SK-N-SH (cell line): ENCODE measurements at regions of chr16 and their contacts with region 1.

Region 1: GRCh38 chr16:58119509-58119845 is 9.7 kb downstream of the CFAP20 start:
- DNase-seq: no peak
- H3K4me3 ChIP-seq: no peak overlapping the region
- H3K27ac ChIP-seq: peak overlapping the region in 1 of 2 experiments; percentile 60; a peak in 2 of 4 replicates
- H3K4me1 ChIP-seq: peaks cover 30 to 71% of the 10 kb centered on the region in 2 experiments
- H3K27me3 ChIP-seq: no peaks in the 10 kb centered on the region
- CTCF ChIP-seq: no peak
- EP300 ChIP-seq: no peak
- RAD21 ChIP-seq: no peak

Region 2: DNA sequence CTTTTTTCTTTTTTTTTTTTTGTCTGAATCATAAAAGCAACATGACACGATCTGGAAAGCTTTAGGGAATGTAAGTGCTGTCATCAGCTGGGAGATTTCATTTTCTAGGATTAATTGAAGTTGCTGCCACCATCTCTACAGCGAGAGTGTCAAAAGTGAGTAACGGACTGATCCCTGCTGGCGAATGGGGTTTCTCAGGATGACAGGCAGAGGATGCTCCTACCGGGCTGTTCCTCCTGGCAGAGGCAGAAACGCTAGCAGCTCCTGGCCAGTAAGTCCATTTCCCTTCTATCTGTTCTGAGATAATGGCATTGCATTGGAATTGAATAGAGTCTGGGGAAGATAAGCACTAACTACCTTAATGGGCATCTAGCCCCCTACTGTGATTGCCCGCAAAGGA is 236.7 kb before region 1 on chr16:
- CTCF ChIA-PET with region 1: interaction called, 10 read pairs
- POLR2A ChIA-PET with region 1: no interaction called
- DNase-seq: peak; percentile 90
- H3K4me3 ChIP-seq: no peak overlapping the region
- H3K27ac ChIP-seq: no peak overlapping the region
- H3K4me1 ChIP-seq: peaks cover 0 to 12% of the 10 kb centered on the region in 2 experiments; a peak in 2 of 4 replicates
- H3K27me3 ChIP-seq: peaks cover 5% of the 10 kb centered on the region; the same call in 1 of the 2 replicates
- CTCF ChIP-seq: no peak
- EP300 ChIP-seq: peak in 1 of 2 experiments; percentile 64; a peak in 2 of 4 replicates
- RAD21 ChIP-seq: peak; percentile 23; the same call in 1 of the 2 replicates

Region 3: DNA sequence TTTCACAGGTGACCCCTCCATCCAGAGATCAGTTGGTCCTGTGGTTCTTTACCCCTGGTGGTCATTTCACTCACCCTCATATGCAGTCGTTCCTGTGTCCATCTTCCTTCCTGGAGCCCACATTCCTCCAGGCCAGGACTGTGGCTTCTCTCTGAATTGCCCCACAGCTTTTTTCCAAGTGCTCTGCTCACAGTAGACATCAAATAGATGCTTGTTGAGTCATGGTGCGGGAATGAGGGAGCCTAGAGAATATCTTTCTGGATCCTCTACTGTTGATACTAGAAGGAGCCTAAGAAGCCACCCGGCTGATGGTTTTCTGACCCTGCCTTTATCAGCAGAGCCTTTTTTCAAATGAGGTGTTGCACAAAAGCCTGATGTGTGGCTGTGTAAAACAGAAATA is 107.8 kb before region 1 on chr16:
- CTCF ChIA-PET with region 1: interaction called, 80 read pairs
- POLR2A ChIA-PET with region 1: no interaction called
- DNase-seq: no peak
- H3K4me3 ChIP-seq: no peak overlapping the region
- H3K27ac ChIP-seq: no peak overlapping the region; a peak in 1 of 4 replicates
- H3K4me1 ChIP-seq: peaks cover 0 to 11% of the 10 kb centered on the region in 2 experiments; a peak in 2 of 4 replicates
- H3K27me3 ChIP-seq: no peaks in the 10 kb centered on the region
- CTCF ChIP-seq: no peak
- EP300 ChIP-seq: no peak
- RAD21 ChIP-seq: no peak

Region 4: GRCh38 chr16:58025351-58026138 is 93.9 kb before region 1 on chr16 and contains the start of gene MMP15:
- CTCF ChIA-PET with region 1: interaction called, 123 read pairs
- POLR2A ChIA-PET with region 1: interaction called, 49 read pairs
- DNase-seq: peak; percentile 87
- H3K4me3 ChIP-seq: peak within 1 kb of the TSS; percentile 64
- H3K27ac ChIP-seq: peak within 1 kb of the TSS in 1 of 2 experiments; percentile 69; a peak in 1 of 4 replicates
- H3K4me1 ChIP-seq: peaks cover 13 to 64% of the 10 kb centered on the region in 2 experiments
- H3K27me3 ChIP-seq: peaks cover 13% of the 10 kb centered on the region
- CTCF ChIP-seq: no peak
- EP300 ChIP-seq: no peak
- RAD21 ChIP-seq: no peak
- polyA plus RNA-seq, gene MMP15: 2.6 and 3.1 TPM in 2 replicates

Region 5: GRCh38 chr16:58049232-58050185 is 70.0 kb before region 1 on chr16:
- CTCF ChIA-PET with region 1: interaction called, 11 read pairs
- POLR2A ChIA-PET with region 1: no interaction called
- DNase-seq: no peak
- H3K4me3 ChIP-seq: no peak overlapping the region
- H3K27ac ChIP-seq: no peak overlapping the region
- H3K4me1 ChIP-seq: no peaks in the 10 kb centered on the region; a peak in 1 of 4 replicates
- H3K27me3 ChIP-seq: no peaks in the 10 kb centered on the region
- CTCF ChIP-seq: no peak
- EP300 ChIP-seq: no peak
- RAD21 ChIP-seq: no peak